CD14-positive monocyte (primary cell): ENCODE measurements at regions of chr17 and their contacts with region 1.

Region 1: GRCh38 chr17:66906321-66907278 is 57.9 kb upstream of the CACNG4 start:
- DNase-seq: peak; percentile 30 to 50 (median 30)
- H3K4me3 ChIP-seq: no peak overlapping the region
- H3K4me3 Mint-ChIP-seq: no peak overlapping the region
- H3K27ac ChIP-seq: no peak overlapping the region
- H3K27ac Mint-ChIP-seq: no peak overlapping the region
- H3K4me1 ChIP-seq: no peaks in the 10 kb centered on the region
- H3K4me1 Mint-ChIP-seq: peaks cover 9% of the 10 kb centered on the region
- H3K27me3 ChIP-seq: no peaks in the 10 kb centered on the region
- H3K27me3 Mint-ChIP-seq: peaks cover 0 to 6% (median 3%) of the 10 kb centered on the region in 3 donors
- CTCF ChIP-seq: peak; percentile 89

Region 2: DNA sequence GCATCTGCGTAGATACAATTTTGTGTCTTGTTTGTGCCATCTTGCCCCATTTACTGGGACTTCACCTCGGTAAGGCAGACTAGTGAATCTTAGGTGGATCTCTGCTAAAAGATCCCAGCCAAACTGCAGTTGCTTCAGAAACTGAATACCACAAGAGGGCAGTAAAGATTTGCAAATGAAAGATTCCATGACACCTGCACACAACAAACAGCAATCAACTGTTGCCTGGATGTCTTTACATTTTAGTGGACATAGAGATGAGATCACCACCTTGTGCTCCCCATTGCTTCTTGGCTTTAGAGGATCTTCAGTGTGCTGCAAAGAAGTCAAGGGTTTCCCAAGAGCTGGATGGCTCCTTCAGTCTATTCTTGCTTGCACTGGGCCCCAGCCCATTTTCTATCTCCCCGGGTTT is 190.8 kb before region 1 on chr17:
- intact Hi-C with region 1: loop called (anchors 2 kb)
- DNase-seq: peak in 2 of 3 donors; percentile 5 to 12
- H3K4me3 ChIP-seq: no peak overlapping the region
- H3K4me3 Mint-ChIP-seq: no peak overlapping the region
- H3K27ac ChIP-seq: no peak overlapping the region
- H3K27ac Mint-ChIP-seq: no peak overlapping the region
- H3K4me1 ChIP-seq: no peaks in the 10 kb centered on the region
- H3K4me1 Mint-ChIP-seq: no peaks in the 10 kb centered on the region
- H3K27me3 ChIP-seq: no peaks in the 10 kb centered on the region
- H3K27me3 Mint-ChIP-seq: no peaks in the 10 kb centered on the region
- CTCF ChIP-seq: peak; percentile 50

Region 3: DNA sequence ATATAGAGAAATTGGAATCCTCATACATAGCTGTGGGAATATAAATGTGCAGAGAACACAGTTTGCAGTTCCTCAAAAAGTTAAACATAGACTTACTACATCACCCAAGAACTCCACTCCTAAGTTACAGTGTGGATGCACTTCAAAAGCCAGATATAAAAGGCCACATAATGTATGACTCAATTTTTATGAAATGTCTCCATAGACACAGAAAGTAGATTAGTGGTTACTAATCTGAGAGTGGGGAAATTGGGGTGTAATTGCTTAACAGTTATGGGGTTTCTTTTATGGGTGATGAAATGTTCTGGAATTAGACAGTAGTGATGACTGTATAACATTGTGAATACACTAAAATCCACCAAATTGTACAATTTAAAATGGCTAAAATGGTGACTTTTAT is 198.6 kb after region 1 on chr17:
- intact Hi-C with region 1: no loop called
- DNase-seq: peak; percentile 84 to 94 (median 92)
- H3K4me3 ChIP-seq: no peak overlapping the region
- H3K4me3 Mint-ChIP-seq: no peak overlapping the region
- H3K27ac ChIP-seq: peak overlapping the region; percentile 82 to 91
- H3K27ac Mint-ChIP-seq: peak overlapping the region; percentile 93 to 99 (median 97)
- H3K4me1 ChIP-seq: peaks cover 15 to 23% of the 10 kb centered on the region in 2 donors
- H3K4me1 Mint-ChIP-seq: peaks cover 26% of the 10 kb centered on the region
- H3K27me3 ChIP-seq: no peaks in the 10 kb centered on the region
- H3K27me3 Mint-ChIP-seq: peaks cover 0 to 5% (median 3%) of the 10 kb centered on the region in 3 donors
- CTCF ChIP-seq: no peak